Posterior vena cava (tissue), 2 donors: ENCODE measurements at regions of chr11 and their contacts with region 1.

Region 1: GRCh38 chr11:76459846-76460245 is 15.0 kb downstream of the EMSY start:
- DNase-seq: no peak

Region 2: GRCh38 chr11:75337195-75337654 is 1122.6 kb before region 1 on chr11:
- intact Hi-C with region 1: loop called in 1 of 2 experiments (anchors 5 kb)
- DNase-seq: no peak

Region 3: DNA sequence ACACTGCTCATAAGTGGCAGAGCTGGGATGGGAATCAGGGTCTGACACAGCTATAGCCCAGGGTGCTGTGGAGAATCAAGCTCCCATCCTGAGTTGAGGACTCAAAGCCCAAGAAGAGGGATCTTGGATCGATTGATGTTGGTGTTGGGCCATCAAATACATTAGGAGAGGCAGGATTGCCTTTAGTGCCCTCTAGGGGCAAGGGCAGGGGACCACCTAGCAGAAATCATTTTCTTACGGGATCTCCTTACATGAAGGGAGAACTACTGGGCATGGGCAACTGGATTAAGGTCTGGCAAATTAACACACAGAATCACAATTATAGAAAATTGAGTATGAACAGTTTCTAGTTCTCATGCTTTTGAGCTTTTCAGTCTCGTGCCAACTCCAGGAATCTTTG is 40.0 kb before region 1 on chr11:
- intact Hi-C with region 1: no loop called
- DNase-seq: no peak